IMR-90 (cell line): ENCODE measurements at regions of chr1 and their contacts with region 1.

Region 1: DNA sequence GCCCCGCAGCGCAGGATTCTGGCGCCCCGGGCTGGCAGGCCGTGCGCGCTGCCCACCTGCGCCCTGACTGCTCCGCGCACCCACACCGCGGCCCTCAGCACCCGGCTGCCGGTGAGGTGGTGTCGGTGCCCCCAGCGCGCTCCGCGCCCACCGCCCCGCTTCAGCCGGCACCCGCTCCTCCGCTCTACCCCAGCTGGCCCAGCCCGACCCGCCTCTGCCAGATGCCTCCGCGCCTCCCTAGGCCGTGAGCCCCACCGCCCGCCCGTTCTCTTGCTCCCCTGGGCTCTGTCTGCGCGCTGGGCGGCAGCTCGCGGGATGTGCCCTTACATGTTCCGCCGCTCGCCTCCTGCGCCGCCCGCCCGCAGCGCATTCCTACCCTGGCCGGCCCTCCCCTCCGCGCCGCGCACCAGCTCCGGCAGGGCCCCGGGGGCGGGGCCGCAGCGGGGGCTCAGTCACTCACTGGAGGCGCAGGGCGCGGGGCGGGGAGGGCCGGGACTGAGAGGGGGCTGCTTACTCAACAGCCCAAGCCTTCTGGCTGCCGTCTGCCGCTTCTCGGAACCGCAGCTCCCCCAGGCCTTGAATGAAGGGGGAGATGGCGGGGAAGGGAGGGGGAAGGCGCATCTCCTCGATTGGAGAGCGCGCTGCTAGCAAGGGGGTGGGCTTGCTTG is at the start of gene PHLDA3:
- DNase-seq: peak; percentile 93
- ATAC-seq: peak; percentile 89
- H3K4me3 ChIP-seq: peak within 1 kb of the TSS; percentile 89
- H3K27ac ChIP-seq: peak within 1 kb of the TSS; percentile 93
- H3K4me1 ChIP-seq: peaks cover 14% of the 10 kb centered on the region
- H3K27me3 ChIP-seq: no peaks in the 10 kb centered on the region
- CTCF ChIP-seq: 0 out of 2 replicates have a peak, but pooled peaks have one; percentile 8
- POLR2A ChIP-seq: peak; percentile 95
- RAD21 ChIP-seq: peak; percentile 14
- total RNA-seq, gene PHLDA3: 41.6 and 44.2 TPM in 2 replicates

Region 2: DNA sequence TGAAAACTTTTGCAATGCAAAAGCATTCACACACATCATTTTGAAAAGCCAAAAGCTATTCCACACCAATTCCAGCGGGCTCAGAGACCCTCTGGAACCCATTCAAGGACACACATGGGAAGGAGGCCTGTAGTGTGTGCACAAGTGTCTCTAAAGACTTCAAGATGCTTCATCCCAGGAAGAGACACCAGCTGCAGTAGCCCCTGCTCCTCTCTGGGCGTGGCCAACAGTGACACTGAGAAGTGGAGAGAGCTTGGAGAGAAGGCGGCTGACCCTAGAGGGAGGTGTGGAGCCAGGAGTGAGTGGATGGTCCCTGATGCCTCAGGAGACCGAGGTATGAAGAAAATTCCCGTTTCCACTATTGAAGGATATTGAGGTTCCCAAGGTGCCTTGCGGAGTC is 32.6 kb before region 1 on chr1:
- CTCF ChIA-PET with region 1: interaction called, 3 read pairs
- POLR2A ChIA-PET with region 1: no interaction called
- dilution Hi-C with region 1: no loop called
- in situ Hi-C with region 1: no loop called
- intact Hi-C with region 1: loop called (anchors 2 kb)
- DNase-seq: peak; percentile 26
- ATAC-seq: peak; percentile 55
- H3K4me3 ChIP-seq: no peak overlapping the region
- H3K27ac ChIP-seq: no peak overlapping the region
- H3K4me1 ChIP-seq: no peaks in the 10 kb centered on the region
- H3K27me3 ChIP-seq: peaks cover 4% of the 10 kb centered on the region; the same call in 1 of the 2 replicates
- CTCF ChIP-seq: peak; percentile 22; the same call in 1 of the 2 replicates
- POLR2A ChIP-seq: no peak
- RAD21 ChIP-seq: peak; percentile 38

Region 3: DNA sequence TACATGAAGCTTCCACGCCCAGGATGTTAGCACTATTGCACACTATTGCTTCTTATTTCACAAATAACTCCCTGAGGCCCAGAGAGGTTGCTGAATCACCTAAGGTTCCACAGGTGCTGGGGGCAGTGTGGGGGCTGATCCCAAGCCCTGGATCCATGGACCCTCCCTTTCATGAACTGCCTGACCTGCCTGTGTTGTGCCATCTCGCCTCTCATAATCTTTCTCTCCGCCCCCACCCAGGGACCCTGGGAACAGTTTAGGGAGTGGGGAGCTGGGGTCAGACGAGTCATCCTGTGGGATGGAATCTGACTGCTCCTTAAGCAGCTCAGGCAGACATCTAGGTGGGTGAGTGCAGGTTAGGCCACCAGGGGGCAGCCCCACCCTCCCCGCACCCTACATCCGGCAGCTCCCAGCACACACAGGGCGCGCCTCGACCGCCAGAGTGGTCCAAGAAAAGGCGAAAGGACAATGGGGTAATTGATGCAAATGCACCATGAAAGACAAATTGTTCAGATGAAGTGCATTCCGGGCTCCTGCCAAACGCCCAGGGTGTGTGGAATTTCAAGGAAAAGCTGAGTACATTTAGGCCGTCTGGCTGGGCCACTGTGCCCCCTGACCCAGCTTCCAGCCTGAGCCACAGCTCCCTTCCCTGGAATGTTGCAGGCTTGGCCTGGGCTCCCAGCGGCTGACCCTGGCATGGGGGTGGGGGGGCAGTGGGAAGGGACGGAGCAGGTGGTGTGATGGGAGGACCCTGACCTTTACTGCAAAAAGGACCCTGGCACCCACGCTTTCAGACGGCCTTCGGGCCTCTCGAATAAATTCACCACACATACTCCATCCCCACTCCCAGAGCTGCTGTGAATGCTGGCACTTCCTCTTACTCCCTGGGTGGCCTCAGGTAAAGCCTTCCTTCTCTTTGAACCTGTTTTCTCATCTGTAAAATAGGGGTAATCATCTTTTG is 20.8 kb before region 1 on chr1:
- CTCF ChIA-PET with region 1: interaction called, 3 read pairs
- POLR2A ChIA-PET with region 1: no interaction called
- dilution Hi-C with region 1: no loop called
- in situ Hi-C with region 1: no loop called
- intact Hi-C with region 1: loop called (anchors 2 kb)
- DNase-seq: peak; percentile 70
- ATAC-seq: peak; percentile 75
- H3K4me3 ChIP-seq: no peak overlapping the region
- H3K27ac ChIP-seq: no peak overlapping the region
- H3K4me1 ChIP-seq: peaks cover 13% of the 10 kb centered on the region
- H3K27me3 ChIP-seq: no peaks in the 10 kb centered on the region
- CTCF ChIP-seq: peak; percentile 74
- POLR2A ChIP-seq: no peak
- RAD21 ChIP-seq: peak; percentile 85

Region 4: DNA sequence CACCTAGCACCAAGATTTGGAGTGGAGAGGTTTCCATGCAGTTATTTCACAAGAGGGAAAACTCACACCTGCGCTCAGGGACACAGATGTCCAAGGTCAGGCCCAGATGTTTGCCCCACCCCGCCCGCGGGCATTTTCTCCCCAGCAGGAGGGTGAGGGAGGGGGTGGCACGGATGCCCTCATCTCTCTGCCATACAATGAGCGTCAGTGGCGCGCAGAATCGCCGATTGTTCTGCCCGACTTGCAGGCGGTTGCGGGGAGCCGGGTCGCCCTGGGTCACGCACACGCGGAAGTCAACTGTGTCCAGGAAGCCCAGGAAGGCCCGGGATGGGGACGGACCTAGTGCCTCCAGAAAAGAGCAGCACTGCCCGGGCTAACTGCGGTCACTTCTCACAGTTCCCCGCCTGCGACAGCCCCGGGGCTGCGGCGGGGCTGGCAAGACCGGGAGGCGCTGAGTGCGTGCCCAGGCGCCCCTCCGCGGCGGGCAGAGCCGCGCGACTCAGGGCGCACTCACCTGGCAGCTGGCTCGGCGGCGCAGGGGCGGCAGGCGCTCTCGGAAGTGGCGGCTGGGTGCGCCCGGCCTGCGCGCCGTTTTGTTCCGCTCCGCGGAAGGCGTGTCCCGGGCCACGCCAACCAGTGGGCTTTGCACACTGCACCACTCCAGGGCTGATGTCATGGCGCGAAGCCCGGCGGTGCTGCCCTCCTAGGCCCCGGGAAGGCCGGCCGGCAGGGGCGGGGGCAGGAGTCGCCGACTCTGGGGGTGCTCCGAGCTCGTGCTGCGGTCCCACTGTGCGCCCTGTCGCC is 37.8 kb after region 1 on chr1 and contains the start of gene CSRP1:
- CTCF ChIA-PET with region 1: no interaction called
- POLR2A ChIA-PET with region 1: interaction called, 7 read pairs
- dilution Hi-C with region 1: no loop called
- in situ Hi-C with region 1: no loop called
- intact Hi-C with region 1: loop called (anchors 5 kb)
- DNase-seq: peak; percentile 87
- ATAC-seq: peak; percentile 76
- H3K4me3 ChIP-seq: peak within 1 kb of the TSS; percentile 79
- H3K27ac ChIP-seq: peak within 1 kb of the TSS; percentile 94
- H3K4me1 ChIP-seq: peaks cover 30% of the 10 kb centered on the region
- H3K27me3 ChIP-seq: no peaks in the 10 kb centered on the region
- CTCF ChIP-seq: no peak
- POLR2A ChIP-seq: peak; percentile 99
- RAD21 ChIP-seq: no peak
- total RNA-seq, gene CSRP1: 1,498 and 1,861 TPM in 2 replicates